ENCODE measurements at regions of chr11 and their contacts with region 1.

Region 1: GRCh38 chr11:57456960-57457642 is 3.2 kb upstream of the RTN4RL2 start:
- DNase-seq: peak; percentile 63 to 70 (median 64)
- H3K4me3 ChIP-seq: peak overlapping the region in 2 of 7 experiments; percentile 12 to 43
- H3K27ac ChIP-seq: no peak overlapping the region
- H3K4me1 ChIP-seq: peaks cover 0 to 41% (median 36%) of the 10 kb centered on the region in 4 experiments
- H3K27me3 ChIP-seq: peaks cover 3 to 46% (median 18%) of the 10 kb centered on the region in 5 experiments

Region 2: DNA sequence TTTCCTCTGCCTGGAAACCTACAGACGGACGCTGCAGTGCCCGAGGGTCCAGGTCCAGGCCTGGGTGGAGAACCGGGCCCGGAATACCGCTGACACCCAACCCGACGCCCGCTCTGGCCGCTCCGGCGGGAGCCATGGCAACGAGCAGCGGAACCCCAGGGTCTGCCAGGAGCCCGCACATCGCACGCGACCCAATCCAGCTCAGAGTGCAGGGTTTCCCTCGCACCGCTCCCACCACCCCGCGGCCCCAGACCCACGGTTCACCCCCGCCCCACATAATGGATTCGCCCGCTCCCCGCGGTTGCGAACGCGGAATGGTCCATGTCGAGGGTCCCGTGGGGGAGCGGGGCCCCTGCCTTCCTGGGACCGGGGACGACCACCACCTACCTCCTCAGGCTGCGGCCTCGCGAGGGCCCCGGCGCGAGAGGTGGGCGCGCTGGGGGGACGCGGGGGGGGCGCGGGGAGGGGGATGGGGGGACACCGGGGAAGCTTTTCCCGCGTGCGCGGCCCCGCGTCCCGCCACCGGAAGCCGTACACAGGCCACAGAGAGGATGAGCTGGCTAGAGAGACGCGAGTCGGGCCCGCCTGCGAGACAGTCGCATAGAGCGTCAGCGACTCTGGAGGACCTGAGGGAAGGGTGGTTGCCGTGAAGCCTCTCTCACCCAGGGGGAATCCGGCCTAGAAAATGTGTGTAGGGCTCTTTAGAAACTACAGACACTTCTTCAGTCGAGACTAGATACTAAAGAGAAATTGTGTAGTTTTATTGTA is 121.6 kb before region 1 on chr11 and contains the start of gene SSRP1:
- CTCF ChIA-PET with region 1: interaction called, 11 read pairs
- POLR2A ChIA-PET with region 1: no interaction called
- DNase-seq: peak; percentile 89 to 92 (median 90)
- H3K4me3 ChIP-seq: peak within 1 kb of the TSS; percentile 61 to 83 (median 77)
- H3K27ac ChIP-seq: peak within 1 kb of the TSS; percentile 55 to 81
- H3K4me1 ChIP-seq: peaks cover 5 to 24% (median 17%) of the 10 kb centered on the region in 4 experiments
- H3K27me3 ChIP-seq: peaks cover 0 to 2% (median 0%) of the 10 kb centered on the region in 5 experiments

Region 3: DNA sequence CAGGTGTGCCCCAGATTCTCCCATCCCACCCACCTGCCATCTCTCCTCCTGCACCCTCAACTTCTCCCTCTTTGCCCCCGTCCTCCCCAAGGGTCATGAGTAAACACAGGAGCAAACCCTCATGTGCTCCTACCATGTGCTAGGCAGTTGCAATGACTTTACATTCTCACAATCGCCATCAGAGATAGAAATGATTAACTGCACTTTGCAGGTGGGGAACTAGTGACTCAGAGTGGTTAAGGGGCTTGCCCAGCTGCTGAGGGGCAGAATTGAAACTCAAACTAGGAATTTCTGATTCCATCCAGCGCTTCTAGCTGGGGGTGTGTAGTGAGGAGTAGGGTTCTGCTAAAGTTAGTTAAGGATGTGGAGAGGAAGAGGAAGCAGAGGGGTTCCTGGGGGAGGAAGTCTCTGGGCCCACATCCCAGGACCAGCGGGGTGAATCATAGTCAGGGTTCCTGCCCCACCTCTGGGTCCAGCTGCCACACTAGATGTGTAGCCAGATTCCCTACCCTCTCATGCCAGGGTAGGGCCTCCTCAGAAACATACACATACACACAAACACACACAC is 50.7 kb before region 1 on chr11:
- CTCF ChIA-PET with region 1: interaction called, 10 read pairs
- POLR2A ChIA-PET with region 1: no interaction called
- DNase-seq: peak; percentile 86 to 97 (median 95)
- H3K4me3 ChIP-seq: peak overlapping the region in 1 of 7 experiments; percentile 10
- H3K27ac ChIP-seq: peak overlapping the region; percentile 7 to 62
- H3K4me1 ChIP-seq: peaks cover 4 to 49% (median 39%) of the 10 kb centered on the region in 4 experiments
- H3K27me3 ChIP-seq: no peaks in the 10 kb centered on the region

Region 4: DNA sequence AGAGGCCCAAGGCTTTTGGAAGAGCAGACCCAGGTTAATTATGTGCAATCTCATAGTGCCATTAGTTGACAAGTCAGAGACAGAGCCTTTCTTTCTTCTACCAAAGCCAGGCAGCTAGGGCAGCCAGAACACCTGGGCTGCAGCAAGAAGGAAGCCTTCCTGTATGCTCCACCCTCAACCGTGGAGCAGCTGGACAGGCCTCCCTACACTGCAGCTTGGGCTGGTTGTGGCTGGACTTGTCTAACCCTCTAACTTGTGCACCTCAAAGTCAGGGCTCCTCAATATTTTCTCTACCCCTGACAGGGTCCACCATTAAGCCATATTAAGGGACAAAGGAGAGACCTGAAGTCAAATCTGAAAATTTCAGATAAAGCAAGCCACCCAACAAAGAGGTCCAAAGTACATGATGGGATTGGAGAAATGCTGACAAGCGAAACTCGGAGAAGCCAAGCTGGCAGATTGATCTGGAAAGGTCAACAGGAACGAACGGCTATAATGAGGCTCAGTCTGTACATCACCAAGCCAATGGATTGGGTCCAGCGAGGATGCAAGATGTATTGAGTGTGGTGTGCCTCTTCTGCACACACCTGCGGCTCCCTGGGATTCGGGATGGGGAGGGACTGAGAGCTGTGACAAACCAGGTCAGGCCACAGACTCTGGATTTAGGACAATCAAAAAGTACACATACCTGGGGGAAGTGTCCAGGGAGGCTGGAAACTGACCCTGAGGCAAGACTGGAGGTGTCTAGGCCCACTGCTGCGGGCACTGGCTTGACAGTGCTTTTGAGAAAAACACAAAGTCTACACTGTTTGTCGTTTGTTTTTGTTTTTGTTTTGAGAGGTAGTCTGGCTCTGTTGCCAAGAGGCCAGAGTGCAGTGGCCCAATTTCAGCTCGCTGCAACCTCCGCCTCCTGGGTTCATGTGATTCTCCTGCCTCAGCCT is 18.5 kb before region 1 on chr11:
- CTCF ChIA-PET with region 1: interaction called, 62 read pairs
- POLR2A ChIA-PET with region 1: interaction called, 3 read pairs
- DNase-seq: no peak
- H3K4me3 ChIP-seq: no peak overlapping the region
- H3K27ac ChIP-seq: no peak overlapping the region
- H3K4me1 ChIP-seq: peaks cover 0 to 17% (median 1%) of the 10 kb centered on the region in 4 experiments
- H3K27me3 ChIP-seq: no peaks in the 10 kb centered on the region

Region 5: GRCh38 chr11:57480409-57481137 is 23.5 kb after region 1 on chr11:
- CTCF ChIA-PET with region 1: interaction called, 211 read pairs
- POLR2A ChIA-PET with region 1: no interaction called
- DNase-seq: peak in 2 of 3 donors; percentile 72 to 73
- H3K4me3 ChIP-seq: no peak overlapping the region
- H3K27ac ChIP-seq: no peak overlapping the region
- H3K4me1 ChIP-seq: peaks cover 18 to 62% (median 55%) of the 10 kb centered on the region in 4 experiments
- H3K27me3 ChIP-seq: peaks cover 0 to 4% (median 0%) of the 10 kb centered on the region in 5 experiments

Region 6: GRCh38 chr11:57515332-57516060 is 58.4 kb after region 1 on chr11 and contains the start of gene SLC43A1:
- CTCF ChIA-PET with region 1: interaction called, 16 read pairs
- POLR2A ChIA-PET with region 1: no interaction called
- DNase-seq: peak; percentile 31 to 44 (median 38)
- H3K4me3 ChIP-seq: peak within 1 kb of the TSS; percentile 75 to 95 (median 89)
- H3K27ac ChIP-seq: peak within 1 kb of the TSS in 1 of 2 experiments; percentile 49
- H3K4me1 ChIP-seq: peaks cover 4 to 32% (median 26%) of the 10 kb centered on the region in 4 experiments
- H3K27me3 ChIP-seq: no peaks in the 10 kb centered on the region